Common myeloid progenitor, CD34-positive (primary cell): ENCODE measurements at regions of chr22 and their contacts with region 1.

Region 1: GRCh38 chr22:45994491-45995404 is 17.8 kb upstream of the WNT7B start:
- DNase-seq: peak in 2 of 3 donors; percentile 48 to 61
- H3K4me3 ChIP-seq: no peak overlapping the region
- H3K27ac ChIP-seq: no peak overlapping the region
- H3K4me1 ChIP-seq: peaks cover 0 to 47% (median 39%) of the 10 kb centered on the region in 4 experiments
- H3K27me3 ChIP-seq: peaks cover 0 to 2% (median 0%) of the 10 kb centered on the region in 5 experiments

Region 2: DNA sequence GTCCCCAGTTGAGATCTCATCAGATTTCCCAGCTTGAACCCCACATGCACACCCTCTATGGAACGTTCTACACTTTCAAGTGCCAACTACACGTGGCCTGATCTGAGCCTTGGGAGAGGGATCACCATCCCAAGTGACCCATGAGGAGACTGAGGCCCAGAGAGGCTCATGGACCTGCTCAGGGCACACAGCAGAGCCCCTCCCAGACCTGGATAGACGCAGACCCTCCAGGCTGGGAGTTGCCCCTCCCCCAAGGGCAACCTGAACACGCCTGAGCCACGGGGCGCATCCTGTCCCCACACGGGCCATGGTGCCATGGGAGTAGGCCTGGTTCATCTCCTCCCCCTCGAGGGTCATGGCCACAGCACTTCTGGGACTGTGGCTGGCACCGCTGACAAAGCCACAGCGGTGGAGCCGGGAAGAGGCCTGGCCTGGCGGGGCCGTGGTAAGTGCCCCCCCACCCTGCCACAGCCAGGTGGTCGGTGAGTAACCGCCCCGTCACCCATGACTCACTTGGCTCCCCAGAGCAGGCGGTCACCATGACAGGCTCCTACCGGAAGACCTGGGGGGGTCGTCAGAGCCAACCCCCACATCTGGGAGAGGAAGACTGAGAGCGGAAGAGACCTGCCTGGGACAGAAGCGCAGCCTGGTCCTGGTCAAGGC is 25.9 kb before region 1 on chr22:
- CTCF ChIA-PET with region 1: no interaction called
- POLR2A ChIA-PET with region 1: no interaction called
- DNase-seq: peak in 2 of 3 donors; percentile 48 to 52
- H3K4me3 ChIP-seq: no peak overlapping the region
- H3K27ac ChIP-seq: no peak overlapping the region
- H3K4me1 ChIP-seq: peaks cover 0 to 38% (median 24%) of the 10 kb centered on the region in 4 experiments
- H3K27me3 ChIP-seq: peaks cover 0 to 90% (median 33%) of the 10 kb centered on the region in 5 experiments

Region 3: DNA sequence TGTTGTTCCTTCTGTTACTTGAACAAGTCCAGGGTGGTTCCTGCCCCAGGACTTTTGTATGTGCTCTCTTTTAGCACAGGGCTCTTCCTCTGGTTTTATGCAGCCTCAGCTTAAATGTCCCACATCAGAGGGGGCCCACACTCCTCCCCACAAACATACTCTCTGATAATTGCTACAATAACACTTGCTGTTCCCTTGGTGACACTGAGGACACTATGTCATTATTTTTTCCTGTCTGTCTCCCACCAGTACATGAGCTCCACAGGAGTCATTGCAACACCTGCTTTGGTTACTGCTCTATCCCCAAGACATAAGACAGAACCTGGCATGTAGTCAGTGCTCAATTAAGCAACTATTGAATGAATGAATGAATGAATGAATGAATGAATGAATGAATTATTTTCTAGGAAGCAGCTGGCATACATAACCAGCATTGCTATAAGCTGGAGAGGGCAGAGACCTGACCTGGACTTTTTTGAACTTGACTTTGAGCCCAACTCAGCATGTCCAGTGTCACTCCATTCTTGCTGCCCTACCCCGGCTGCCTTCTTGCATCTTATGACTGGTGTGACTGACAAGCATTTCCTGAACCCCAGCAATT is 10.3 kb before region 1 on chr22:
- CTCF ChIA-PET with region 1: interaction called, 32 read pairs
- POLR2A ChIA-PET with region 1: no interaction called
- DNase-seq: peak; percentile 29 to 75 (median 58)
- H3K4me3 ChIP-seq: no peak overlapping the region
- H3K27ac ChIP-seq: no peak overlapping the region
- H3K4me1 ChIP-seq: peaks cover 0 to under 1% (median 0%) of the 10 kb centered on the region in 4 experiments
- H3K27me3 ChIP-seq: peaks cover 0 to 4% (median 0%) of the 10 kb centered on the region in 5 experiments

Region 4: DNA sequence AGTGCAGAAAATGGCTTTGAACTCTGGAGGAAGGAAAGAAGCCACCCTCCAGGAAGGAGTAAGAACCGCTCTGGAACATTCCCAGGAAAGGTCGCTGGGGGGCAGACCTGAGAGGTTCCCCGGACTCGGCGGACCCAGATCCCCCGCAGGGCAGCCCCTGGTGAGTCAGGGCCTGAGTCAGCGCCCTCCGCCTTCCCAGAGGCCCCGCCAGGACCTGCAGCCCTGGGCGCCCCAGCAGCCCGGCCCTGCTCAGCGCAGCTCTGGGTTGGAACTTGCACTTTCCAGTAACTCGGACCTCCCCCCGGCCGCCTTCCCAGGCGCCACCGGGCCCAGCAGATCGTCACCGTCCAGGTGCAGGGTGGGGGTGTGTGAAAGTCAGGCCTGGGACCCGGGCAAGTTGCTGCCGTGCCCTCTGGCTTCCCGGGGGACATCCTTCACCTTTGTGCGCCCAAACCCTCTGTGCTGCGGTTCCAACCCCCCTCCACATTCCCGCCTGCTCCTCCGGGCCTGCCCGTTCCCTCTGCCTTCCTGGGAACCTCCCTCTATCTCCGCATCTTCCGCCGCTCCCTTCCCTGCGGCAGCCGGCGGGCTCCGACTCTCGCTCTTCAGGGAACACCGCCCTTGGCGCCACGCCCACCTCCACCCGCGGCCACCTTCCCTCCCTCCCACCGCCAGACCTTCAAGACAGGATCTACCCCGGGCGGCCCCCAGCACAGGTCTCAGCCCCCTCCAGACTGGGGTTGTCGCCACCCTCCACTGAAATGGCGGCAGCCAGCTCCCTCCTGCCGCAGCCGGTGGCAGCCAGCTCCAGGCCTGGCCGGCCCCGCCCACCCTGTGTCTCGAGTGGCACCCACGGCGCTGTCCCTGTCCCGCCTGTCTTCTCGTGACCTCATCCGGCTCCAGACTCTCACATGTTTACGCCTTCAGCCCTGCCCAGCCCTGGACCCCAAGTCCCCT is 19.0 kb after region 1 on chr22:
- CTCF ChIA-PET with region 1: interaction called, 83 read pairs
- POLR2A ChIA-PET with region 1: no interaction called
- DNase-seq: peak; percentile 92 to 96 (median 95)
- H3K4me3 ChIP-seq: peak overlapping the region; percentile 67 to 94 (median 81)
- H3K27ac ChIP-seq: peak overlapping the region; percentile 72 to 85
- H3K4me1 ChIP-seq: peaks cover 3 to 30% (median 23%) of the 10 kb centered on the region in 4 experiments
- H3K27me3 ChIP-seq: no peaks in the 10 kb centered on the region

Region 5: GRCh38 chr22:46035742-46036557 is 41.2 kb after region 1 on chr22:
- CTCF ChIA-PET with region 1: interaction called, 11 read pairs
- POLR2A ChIA-PET with region 1: interaction called, 4 read pairs
- DNase-seq: peak; percentile 98 to 99 (median 99)
- H3K4me3 ChIP-seq: peak overlapping the region; percentile 63 to 90 (median 87)
- H3K27ac ChIP-seq: peak overlapping the region; percentile 58 to 89
- H3K4me1 ChIP-seq: peaks cover 0 to 55% (median 38%) of the 10 kb centered on the region in 4 experiments
- H3K27me3 ChIP-seq: peaks cover 0 to 2% (median 0%) of the 10 kb centered on the region in 5 experiments

Region 6: DNA sequence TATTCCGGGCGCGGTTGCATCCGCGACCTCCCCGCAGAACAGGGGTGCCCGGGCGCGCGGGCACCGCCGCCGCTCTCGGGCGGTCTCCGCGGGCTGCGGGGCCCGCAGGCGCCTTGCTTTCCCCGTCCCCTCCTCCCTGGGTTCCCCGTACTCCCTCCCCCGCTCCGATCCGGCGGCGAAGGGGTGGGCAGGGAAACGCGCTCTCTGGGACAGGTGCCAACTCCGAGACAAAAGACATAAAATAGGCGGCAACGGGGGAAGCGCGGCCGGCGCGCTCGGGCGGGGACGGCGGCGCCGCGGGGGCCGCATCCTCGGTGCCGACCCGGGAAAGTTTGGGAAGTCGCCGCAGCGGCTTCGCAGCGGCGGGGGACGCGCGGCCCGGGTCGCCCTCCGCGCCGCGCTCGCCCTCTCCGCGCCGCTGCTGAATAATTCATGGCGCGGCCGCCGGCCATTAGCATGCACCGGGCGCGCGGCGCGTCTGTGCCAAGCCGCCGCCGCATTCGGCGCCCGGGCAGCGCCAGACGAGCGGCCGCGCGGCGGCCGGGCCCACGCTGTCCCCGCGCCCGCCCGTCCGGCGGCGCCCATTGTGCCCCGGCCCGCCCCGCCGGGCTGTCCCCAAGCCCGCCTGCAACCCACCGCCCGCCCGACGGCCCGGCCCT is 76.8 kb after region 1 on chr22:
- CTCF ChIA-PET with region 1: interaction called, 15 read pairs
- POLR2A ChIA-PET with region 1: interaction called, 3 read pairs
- DNase-seq: peak; percentile 78 to 92 (median 91)
- H3K4me3 ChIP-seq: peak overlapping the region; percentile 64 to 91 (median 77)
- H3K27ac ChIP-seq: peak overlapping the region; percentile 46 to 78
- H3K4me1 ChIP-seq: peaks cover 3 to 71% (median 36%) of the 10 kb centered on the region in 4 experiments
- H3K27me3 ChIP-seq: peaks cover 0 to 36% (median 0%) of the 10 kb centered on the region in 5 experiments

Region 7: GRCh38 chr22:46116491-46116958 is 121.8 kb after region 1 on chr22:
- CTCF ChIA-PET with region 1: interaction called, 198 read pairs
- POLR2A ChIA-PET with region 1: interaction called, 5 read pairs
- DNase-seq: peak; percentile 79 to 90 (median 87)
- H3K4me3 ChIP-seq: no peak overlapping the region
- H3K27ac ChIP-seq: no peak overlapping the region
- H3K4me1 ChIP-seq: peaks cover 0 to 22% (median 14%) of the 10 kb centered on the region in 4 experiments
- H3K27me3 ChIP-seq: no peaks in the 10 kb centered on the region

Region 8: GRCh38 chr22:46122511-46122971 is 127.8 kb after region 1 on chr22:
- CTCF ChIA-PET with region 1: interaction called, 198 read pairs
- POLR2A ChIA-PET with region 1: interaction called, 3 read pairs
- DNase-seq: peak; percentile 38 to 58 (median 57)
- H3K4me3 ChIP-seq: peak overlapping the region in 2 of 7 experiments; percentile 11 to 42
- H3K27ac ChIP-seq: no peak overlapping the region
- H3K4me1 ChIP-seq: peaks cover 0 to 24% (median 15%) of the 10 kb centered on the region in 4 experiments
- H3K27me3 ChIP-seq: no peaks in the 10 kb centered on the region